ENCODE measurements at regions of chr3 and their contacts with region 1.

Region 1: GRCh38 chr3:20080956-20081554 is 40.8 kb downstream of the KAT2B start:
- DNase-seq: peak; percentile 94 to 98
- ATAC-seq: peak; percentile 99 to 100
- H3K4me3 ChIP-seq: no peak overlapping the region
- H3K27ac ChIP-seq: peak overlapping the region; percentile 68 to 85 (median 80)
- H3K4me1 ChIP-seq: peaks cover 21 to 25% of the 10 kb centered on the region in 2 donors
- H3K27me3 ChIP-seq: no peaks in the 10 kb centered on the region
- CTCF ChIP-seq: no peak
- POLR2A ChIP-seq: peak; percentile 27 to 72

Region 2: DNA sequence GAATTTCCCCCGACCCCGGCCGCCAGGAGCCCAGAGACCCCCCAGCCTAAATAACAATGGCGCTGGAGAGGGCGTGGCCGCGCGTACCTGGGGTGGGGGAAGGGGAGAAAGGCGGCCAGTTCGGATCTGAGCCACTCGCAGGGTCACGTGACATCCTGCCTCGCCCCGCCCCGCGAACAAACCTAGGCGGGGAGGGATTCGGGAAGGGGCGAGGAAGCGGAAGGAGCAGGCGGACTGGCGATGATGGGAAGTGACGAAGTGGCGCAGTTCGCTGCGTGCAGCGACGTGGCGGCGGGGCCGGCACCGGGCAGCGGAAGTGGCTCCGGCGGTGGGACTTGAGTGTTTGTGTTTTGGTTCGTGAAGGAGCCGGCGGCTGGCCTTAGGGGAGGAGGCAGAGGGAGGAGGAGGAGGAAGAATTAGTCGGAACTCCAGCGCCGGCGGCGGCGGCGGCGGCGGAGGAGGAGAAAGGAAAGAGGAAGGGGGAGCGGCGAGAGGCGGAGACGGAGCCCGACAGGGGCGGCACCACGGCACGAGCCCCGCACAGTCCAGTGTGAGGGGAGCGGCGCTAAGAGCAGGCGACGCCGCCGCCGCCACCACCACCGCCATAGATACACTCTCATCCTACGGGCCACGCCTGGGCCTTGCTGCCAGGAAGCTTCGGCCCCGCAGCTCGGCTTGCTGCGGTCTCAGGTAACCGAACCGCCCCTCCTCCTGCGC is 134.1 kb before region 1 on chr3 and contains the start of gene RAB5A:
- in situ Hi-C with region 1: no loop called
- intact Hi-C with region 1: loop called (anchors 2 kb)
- DNase-seq: peak; percentile 97
- ATAC-seq: peak; percentile 97
- H3K4me3 ChIP-seq: peak within 1 kb of the TSS; percentile 74 to 95 (median 84)
- H3K27ac ChIP-seq: peak within 1 kb of the TSS; percentile 94 to 97 (median 96)
- H3K4me1 ChIP-seq: peaks cover 24 to 31% of the 10 kb centered on the region in 2 donors
- H3K27me3 ChIP-seq: no peaks in the 10 kb centered on the region
- CTCF ChIP-seq: peak in 3 of 5 experiments; percentile 11 to 47 (median 41)
- POLR2A ChIP-seq: peak; percentile 88 to 91
- total RNA-seq, gene RAB5A: 30.9 to 43.7 (median 35.5) TPM

Region 3: DNA sequence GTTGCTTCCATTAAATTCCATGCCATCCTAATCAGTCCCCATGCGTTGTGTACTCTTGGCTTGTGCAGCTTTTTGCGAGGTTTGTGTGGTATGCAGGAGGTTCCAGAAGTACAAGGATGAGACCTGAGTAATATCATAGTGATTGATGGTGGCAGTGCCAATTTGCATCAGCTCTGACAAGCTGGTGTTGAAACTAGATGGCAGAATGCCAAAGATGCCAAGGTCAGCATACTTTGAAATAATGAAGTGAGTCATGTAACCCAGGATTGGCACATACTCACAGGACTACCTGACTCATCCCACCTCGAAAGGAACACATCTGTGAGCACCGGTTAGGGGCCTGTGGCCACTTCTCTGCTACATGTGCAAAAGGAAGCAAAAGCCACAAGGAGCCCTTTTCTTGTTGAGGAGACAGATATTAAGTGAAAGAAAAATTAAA is 26.5 kb before region 1 on chr3:
- in situ Hi-C with region 1: no loop called
- intact Hi-C with region 1: loop called (anchors 1 kb)
- DNase-seq: peak; percentile 89
- ATAC-seq: peak; percentile 90 to 91
- H3K4me3 ChIP-seq: no peak overlapping the region
- H3K27ac ChIP-seq: peak overlapping the region; percentile 80 to 86 (median 84)
- H3K4me1 ChIP-seq: peaks cover 42 to 45% of the 10 kb centered on the region in 2 donors
- H3K27me3 ChIP-seq: no peaks in the 10 kb centered on the region
- CTCF ChIP-seq: no peak
- POLR2A ChIP-seq: no peak

Region 4: GRCh38 chr3:20246662-20247061 is 165.6 kb after region 1 on chr3:
- in situ Hi-C with region 1: no loop called
- intact Hi-C with region 1: no loop called
- DNase-seq: no peak
- ATAC-seq: no peak
- H3K4me3 ChIP-seq: no peak overlapping the region
- H3K27ac ChIP-seq: no peak overlapping the region
- H3K4me1 ChIP-seq: no peaks in the 10 kb centered on the region
- H3K27me3 ChIP-seq: no peaks in the 10 kb centered on the region
- CTCF ChIP-seq: no peak
- POLR2A ChIP-seq: no peak

Measured in gastrocnemius medialis (tissue), 4 donors.